Activated CD8-positive, alpha-beta T cell treated with anti-CD3 and anti-CD28 coated beads for 36 hours (primary cell): ENCODE measurements at regions of chr12 and their contacts with region 1.

Region 1: GRCh38 chr12:125533434-125534029 is 468.3 kb downstream of the AACS start:
- DNase-seq: peak; percentile 44
- ATAC-seq: no peak
- H3K4me3 Mint-ChIP-seq: no peak overlapping the region
- H3K27ac Mint-ChIP-seq: no peak overlapping the region
- H3K4me1 Mint-ChIP-seq: no peaks in the 10 kb centered on the region
- H3K27me3 Mint-ChIP-seq: peaks cover 4% of the 10 kb centered on the region
- CTCF ChIP-seq: peak; percentile 64

Region 2: GRCh38 chr12:124881123-124881522 is 652.4 kb before region 1 on chr12:
- CTCF ChIA-PET with region 1: no interaction called
- POLR2A ChIA-PET with region 1: no interaction called
- intact Hi-C with region 1: no loop called
- DNase-seq: no peak
- ATAC-seq: peak; percentile 39
- H3K4me3 Mint-ChIP-seq: no peak overlapping the region
- H3K27ac Mint-ChIP-seq: no peak overlapping the region
- H3K4me1 Mint-ChIP-seq: peaks cover 12% of the 10 kb centered on the region
- H3K27me3 Mint-ChIP-seq: no peaks in the 10 kb centered on the region
- CTCF ChIP-seq: no peak

Region 3: GRCh38 chr12:125544960-125545359 is 11.4 kb after region 1 on chr12:
- CTCF ChIA-PET with region 1: no interaction called
- POLR2A ChIA-PET with region 1: no interaction called
- intact Hi-C with region 1: no loop called
- DNase-seq: no peak
- ATAC-seq: no peak
- H3K4me3 Mint-ChIP-seq: no peak overlapping the region
- H3K27ac Mint-ChIP-seq: no peak overlapping the region
- H3K4me1 Mint-ChIP-seq: no peaks in the 10 kb centered on the region
- H3K27me3 Mint-ChIP-seq: peaks cover 2% of the 10 kb centered on the region
- CTCF ChIP-seq: no peak

Region 4: GRCh38 chr12:125683748-125684381 is 150.3 kb after region 1 on chr12:
- CTCF ChIA-PET with region 1: no interaction called
- POLR2A ChIA-PET with region 1: no interaction called
- intact Hi-C with region 1: loop called (anchors 10 kb)
- DNase-seq: peak; percentile 71
- ATAC-seq: peak; percentile 64
- H3K4me3 Mint-ChIP-seq: no peak overlapping the region
- H3K27ac Mint-ChIP-seq: no peak overlapping the region
- H3K4me1 Mint-ChIP-seq: no peaks in the 10 kb centered on the region
- H3K27me3 Mint-ChIP-seq: peaks cover 4% of the 10 kb centered on the region
- CTCF ChIP-seq: peak; percentile 79

Region 5: GRCh38 chr12:125773033-125773640 is 239.6 kb after region 1 on chr12:
- CTCF ChIA-PET with region 1: no interaction called
- POLR2A ChIA-PET with region 1: no interaction called
- intact Hi-C with region 1: loop called (anchors 5 kb)
- DNase-seq: peak; percentile 32
- ATAC-seq: peak; percentile 30
- H3K4me3 Mint-ChIP-seq: no peak overlapping the region
- H3K27ac Mint-ChIP-seq: no peak overlapping the region
- H3K4me1 Mint-ChIP-seq: no peaks in the 10 kb centered on the region
- H3K27me3 Mint-ChIP-seq: peaks cover 2% of the 10 kb centered on the region
- CTCF ChIP-seq: peak; percentile 12

Region 6: DNA sequence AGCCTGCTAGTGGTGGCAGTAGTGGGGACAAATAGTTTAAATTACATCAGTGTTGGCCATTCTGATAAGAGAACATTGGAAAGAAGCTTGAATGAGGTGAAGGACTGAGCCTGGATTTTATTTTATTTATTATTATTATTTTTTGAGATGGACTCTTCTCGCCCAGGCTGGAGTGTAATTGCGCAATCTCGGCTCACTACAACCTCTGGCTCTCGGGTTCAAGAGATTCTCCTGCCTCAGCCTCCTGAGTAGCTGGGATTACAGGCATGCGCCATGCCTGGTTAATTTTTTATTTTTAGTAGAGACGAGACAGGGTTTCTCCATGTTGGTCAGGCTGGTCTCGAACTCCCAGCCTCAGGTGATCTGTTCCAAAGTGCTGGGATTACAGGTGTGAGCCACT is 271.1 kb after region 1 on chr12:
- CTCF ChIA-PET with region 1: no interaction called
- POLR2A ChIA-PET with region 1: no interaction called
- intact Hi-C with region 1: no loop called
- DNase-seq: no peak
- ATAC-seq: no peak
- H3K4me3 Mint-ChIP-seq: no peak overlapping the region
- H3K27ac Mint-ChIP-seq: no peak overlapping the region
- H3K4me1 Mint-ChIP-seq: no peaks in the 10 kb centered on the region
- H3K27me3 Mint-ChIP-seq: no peaks in the 10 kb centered on the region
- CTCF ChIP-seq: no peak